Motor neuron (in vitro differentiated cells): ENCODE measurements at regions of chr5 and their contacts with region 1.

Region 1: GRCh38 chr5:79020861-79021561 is 35.9 kb upstream of the ARSB start:
- ATAC-seq: peak in 7 of 8 experiments; percentile 52 to 84 (median 76)
- H3K4me3 ChIP-seq: no peak overlapping the region
- H3K27ac ChIP-seq: no peak overlapping the region
- H3K4me1 ChIP-seq: peaks cover 0 to 3% of the 10 kb centered on the region in 2 donors

Region 2: GRCh38 chr5:78953092-78953800 is 67.8 kb before region 1 on chr5:
- in situ Hi-C with region 1: no loop called
- ATAC-seq: peak in 1 of 8 experiments; percentile 24
- H3K4me3 ChIP-seq: no peak overlapping the region
- H3K27ac ChIP-seq: no peak overlapping the region
- H3K4me1 ChIP-seq: no peaks in the 10 kb centered on the region

Region 3: DNA sequence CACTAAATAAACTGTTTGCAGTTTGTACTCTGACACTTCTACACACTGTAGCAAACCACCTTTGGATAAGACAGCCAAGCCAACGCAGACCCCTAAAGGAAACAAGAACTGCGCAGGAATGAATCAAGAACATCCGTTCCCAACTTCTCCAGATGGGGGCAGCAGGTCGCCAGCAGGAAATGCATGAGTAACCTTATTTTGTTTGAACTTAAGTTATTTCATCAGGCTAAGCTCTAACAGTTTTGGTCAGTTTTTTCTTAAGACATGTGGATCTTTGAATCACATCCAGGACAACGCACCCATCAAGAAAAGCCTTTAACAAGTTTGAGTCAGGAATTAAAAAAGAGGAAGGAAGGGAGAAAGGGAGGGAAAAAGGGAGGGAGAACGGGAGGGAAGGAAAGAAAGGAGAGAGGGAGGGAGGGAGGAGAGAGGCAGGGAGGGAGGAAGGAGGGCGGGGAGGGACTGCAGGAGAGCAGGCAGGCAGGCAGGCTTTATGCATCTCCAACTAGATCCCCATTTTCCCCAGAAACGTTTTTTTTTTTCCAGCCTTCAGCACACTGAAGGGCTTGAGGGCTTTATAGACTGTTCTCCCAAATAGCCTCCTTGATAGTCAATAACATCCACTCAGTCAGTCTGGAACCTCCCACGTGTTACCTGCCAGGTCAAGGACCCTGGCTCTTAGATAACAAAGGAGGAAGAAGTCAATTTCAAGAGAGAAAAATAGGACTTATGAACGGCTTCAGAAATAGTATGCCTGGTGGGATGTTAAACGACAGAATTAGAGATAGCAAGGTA is 112.8 kb after region 1 on chr5:
- in situ Hi-C with region 1: loop called in 3 of 9 experiments (anchors 10 kb)
- ATAC-seq: peak; percentile 70 to 91 (median 82)
- H3K4me3 ChIP-seq: peak overlapping the region; percentile 11 to 19 (median 15)
- H3K27ac ChIP-seq: no peak overlapping the region
- H3K4me1 ChIP-seq: peaks cover 5 to 19% of the 10 kb centered on the region in 2 donors

Region 4: DNA sequence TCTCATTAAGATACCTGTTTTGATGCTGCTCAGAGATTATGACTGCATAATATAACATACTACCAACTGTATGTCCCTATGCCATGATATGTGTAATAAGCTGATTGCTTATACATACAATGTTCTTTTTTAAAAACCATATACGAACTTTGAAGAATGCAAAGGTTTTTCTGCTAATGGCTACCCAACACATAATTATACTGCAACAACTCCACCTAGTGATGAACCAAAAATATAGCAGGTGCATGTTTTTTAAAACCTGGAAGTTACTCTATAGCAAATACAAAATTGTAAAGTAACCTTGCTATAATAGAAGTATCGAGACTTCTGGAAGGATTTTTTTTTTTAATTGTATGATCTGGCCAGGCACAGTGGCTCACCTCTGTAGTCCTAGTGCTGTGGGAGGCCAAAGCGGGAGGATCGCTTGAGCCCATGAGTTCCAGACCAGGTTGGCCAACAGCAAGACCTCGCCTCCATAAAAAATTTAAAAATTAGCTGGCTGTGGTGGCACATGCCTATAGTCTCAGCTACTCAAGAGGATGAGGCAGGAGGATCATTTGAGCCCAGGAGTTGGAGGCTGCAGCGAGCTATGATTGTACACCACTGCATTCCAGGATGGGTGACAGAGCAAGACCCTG is 443.8 kb after region 1 on chr5:
- in situ Hi-C with region 1: loop called in 1 of 9 experiments (anchors 25 kb)
- ATAC-seq: peak in 3 of 8 experiments; percentile 50 to 72 (median 58)
- H3K4me3 ChIP-seq: no peak overlapping the region
- H3K27ac ChIP-seq: no peak overlapping the region
- H3K4me1 ChIP-seq: no peaks in the 10 kb centered on the region

Region 5: DNA sequence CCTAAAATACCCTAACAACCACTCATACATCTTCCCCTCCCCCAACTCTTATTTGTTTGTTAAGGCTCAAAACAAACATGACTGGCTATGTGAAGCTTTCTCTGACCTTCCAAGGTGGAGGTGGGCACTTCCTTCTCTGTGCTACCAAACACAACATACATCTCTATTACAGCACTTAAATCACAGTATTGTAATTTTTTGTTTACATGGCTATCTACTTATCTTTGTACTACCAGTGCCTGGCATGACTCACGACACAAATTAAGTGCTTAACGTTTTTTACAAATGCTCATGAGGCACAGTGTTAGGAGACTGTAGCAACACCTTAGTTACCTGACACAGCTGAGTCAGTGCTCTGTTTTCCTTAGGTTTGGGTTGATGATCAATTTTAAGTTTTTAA is 474.3 kb after region 1 on chr5:
- in situ Hi-C with region 1: loop called in 1 of 9 experiments (anchors 25 kb)
- ATAC-seq: peak in 1 of 8 experiments; percentile 63
- H3K4me3 ChIP-seq: no peak overlapping the region
- H3K27ac ChIP-seq: no peak overlapping the region
- H3K4me1 ChIP-seq: no peaks in the 10 kb centered on the region

Region 6: DNA sequence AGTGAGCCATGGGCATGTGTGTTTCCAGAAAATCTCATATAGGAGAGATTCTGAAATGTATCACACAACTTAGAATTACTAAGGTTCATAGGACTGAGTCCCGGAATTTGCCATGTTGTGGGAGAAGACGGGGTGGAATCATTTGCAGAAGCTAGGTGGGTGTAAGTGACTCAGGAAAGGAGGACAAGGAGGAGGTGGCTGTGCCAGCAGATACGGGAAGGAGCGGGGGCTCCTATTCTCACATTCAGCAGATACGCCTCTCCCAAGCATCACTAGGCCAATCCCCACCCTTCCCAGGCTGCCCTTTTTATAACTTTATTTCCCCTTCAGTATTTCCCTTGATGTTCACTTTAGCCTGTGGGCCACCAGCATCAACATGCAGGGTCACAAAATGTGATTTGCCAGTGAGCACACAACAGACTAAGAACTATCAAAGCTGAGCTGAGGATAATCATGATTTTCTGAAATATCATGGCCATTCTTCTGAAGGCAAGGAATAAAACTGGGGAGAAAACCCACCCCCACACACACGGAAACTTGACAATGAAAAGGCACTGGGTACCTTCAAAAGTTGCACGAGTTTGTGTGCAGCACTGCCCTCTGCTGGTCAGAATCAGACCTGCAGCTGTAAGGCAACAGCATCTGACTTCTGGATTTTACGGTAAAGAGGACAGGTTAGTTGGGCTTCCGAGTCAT is 836.9 kb after region 1 on chr5:
- in situ Hi-C with region 1: loop called in 1 of 9 experiments (anchors 25 kb)
- ATAC-seq: peak in 6 of 8 experiments; percentile 33 to 69 (median 50)
- H3K4me3 ChIP-seq: no peak overlapping the region
- H3K27ac ChIP-seq: no peak overlapping the region
- H3K4me1 ChIP-seq: peaks cover 0 to 3% of the 10 kb centered on the region in 2 donors

Region 7: DNA sequence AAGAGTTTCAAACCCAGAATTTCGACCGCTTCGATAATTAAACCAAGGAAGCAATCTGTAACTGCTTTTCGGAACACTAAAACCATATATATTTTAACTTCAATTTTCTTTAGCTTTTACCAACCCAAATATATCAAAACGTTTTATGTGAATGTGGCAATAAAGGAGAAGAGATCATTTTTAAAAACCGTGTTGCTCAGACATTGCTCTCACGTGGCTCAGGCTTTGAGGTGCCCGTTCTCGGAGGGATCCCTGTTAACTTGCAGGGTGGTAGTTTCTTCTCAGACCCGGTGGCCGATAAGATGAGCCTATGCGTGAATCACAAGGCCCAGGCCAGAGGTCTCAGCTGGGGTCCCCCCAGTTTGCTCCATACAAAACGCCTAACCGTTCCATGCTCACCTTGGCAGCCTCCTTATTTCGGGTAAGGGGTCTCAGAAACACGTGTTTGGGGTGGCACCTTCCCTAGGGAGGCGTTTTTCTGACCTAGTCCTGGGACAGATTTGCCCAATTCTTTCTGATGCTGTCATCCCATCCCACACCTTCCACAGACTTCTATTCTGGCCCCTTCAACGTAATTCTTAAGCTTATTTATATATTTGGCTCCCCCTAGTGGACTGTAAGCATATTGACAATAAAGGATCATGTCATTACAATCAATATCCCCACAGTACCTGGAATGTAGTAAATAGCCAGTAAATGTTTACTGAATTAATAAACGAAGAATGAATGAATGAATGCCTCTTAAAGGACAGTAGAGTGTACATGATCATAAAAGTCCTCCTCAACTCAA is 1062.3 kb after region 1 on chr5:
- in situ Hi-C with region 1: loop called in 1 of 9 experiments (anchors 25 kb)
- ATAC-seq: peak; percentile 67 to 84 (median 72)
- H3K4me3 ChIP-seq: no peak overlapping the region
- H3K27ac ChIP-seq: no peak overlapping the region
- H3K4me1 ChIP-seq: peaks cover 0 to 3% of the 10 kb centered on the region in 2 donors